CD4-positive, alpha-beta memory T cell (primary cell): ENCODE measurements at regions of chr4 and their contacts with region 1.

Region 1: DNA sequence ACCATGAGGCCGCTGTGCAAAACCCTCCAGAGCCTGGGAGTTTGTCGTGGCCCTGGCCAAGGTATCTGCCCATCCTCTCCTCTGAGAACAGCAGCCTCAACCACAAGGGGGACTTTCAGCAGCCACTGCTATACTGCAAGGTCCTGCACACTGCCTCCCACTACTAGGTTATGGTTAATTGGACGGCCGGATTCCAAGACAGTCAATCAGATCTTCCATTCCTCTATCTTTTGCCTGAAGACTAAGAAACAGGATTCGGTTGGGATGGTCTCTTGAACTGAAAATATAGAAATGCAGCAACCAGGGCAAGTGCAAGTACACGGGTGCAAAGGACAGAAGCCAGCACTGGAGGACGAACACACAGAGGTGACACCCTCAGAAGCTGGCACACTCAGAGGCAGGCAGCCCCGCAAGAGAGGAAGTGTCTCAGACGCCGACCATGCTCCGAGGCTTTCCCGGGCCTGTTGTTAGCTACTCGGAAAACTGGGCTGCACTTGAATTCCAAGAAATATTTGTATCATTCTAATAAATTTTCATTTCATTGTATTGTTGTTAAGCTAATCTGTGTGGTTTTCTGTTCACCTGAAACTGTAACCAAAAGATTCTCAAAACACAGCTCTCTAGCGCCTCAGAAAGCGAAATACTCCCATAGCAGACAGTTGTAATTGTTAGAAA is 63.3 kb downstream of the AFAP1 start:
- DNase-seq: peak; percentile 30 to 45 (median 36)
- H3K4me3 ChIP-seq: peak overlapping the region in 1 of 2 donors; percentile 33
- H3K4me3 Mint-ChIP-seq: peak overlapping the region; percentile 61 to 94 (median 82)
- H3K27ac ChIP-seq: peak overlapping the region; percentile 44
- H3K27ac Mint-ChIP-seq: peak overlapping the region; percentile 67 to 96 (median 91)
- H3K4me1 ChIP-seq: peaks cover 42% of the 10 kb centered on the region
- H3K4me1 Mint-ChIP-seq: peaks cover 38 to 67% (median 58%) of the 10 kb centered on the region in 4 donors
- H3K27me3 ChIP-seq: no peaks in the 10 kb centered on the region
- H3K27me3 Mint-ChIP-seq: no peaks in the 10 kb centered on the region

Region 2: GRCh38 chr4:7827991-7828720 is 48.2 kb before region 1 on chr4:
- CTCF ChIA-PET with region 1: interaction called, 4 read pairs
- POLR2A ChIA-PET with region 1: interaction called, 3 read pairs
- intact Hi-C with region 1: loop called (anchors 1 kb)
- DNase-seq: peak; percentile 47 to 90 (median 57)
- H3K4me3 ChIP-seq: peak overlapping the region in 1 of 2 donors; percentile 29
- H3K4me3 Mint-ChIP-seq: peak overlapping the region; percentile 5 to 86 (median 77)
- H3K27ac ChIP-seq: peak overlapping the region; percentile 55
- H3K27ac Mint-ChIP-seq: peak overlapping the region; percentile 88 to 97 (median 89)
- H3K4me1 ChIP-seq: peaks cover 53% of the 10 kb centered on the region
- H3K4me1 Mint-ChIP-seq: peaks cover 54 to 71% (median 61%) of the 10 kb centered on the region in 4 donors
- H3K27me3 ChIP-seq: no peaks in the 10 kb centered on the region
- H3K27me3 Mint-ChIP-seq: no peaks in the 10 kb centered on the region

Region 3: DNA sequence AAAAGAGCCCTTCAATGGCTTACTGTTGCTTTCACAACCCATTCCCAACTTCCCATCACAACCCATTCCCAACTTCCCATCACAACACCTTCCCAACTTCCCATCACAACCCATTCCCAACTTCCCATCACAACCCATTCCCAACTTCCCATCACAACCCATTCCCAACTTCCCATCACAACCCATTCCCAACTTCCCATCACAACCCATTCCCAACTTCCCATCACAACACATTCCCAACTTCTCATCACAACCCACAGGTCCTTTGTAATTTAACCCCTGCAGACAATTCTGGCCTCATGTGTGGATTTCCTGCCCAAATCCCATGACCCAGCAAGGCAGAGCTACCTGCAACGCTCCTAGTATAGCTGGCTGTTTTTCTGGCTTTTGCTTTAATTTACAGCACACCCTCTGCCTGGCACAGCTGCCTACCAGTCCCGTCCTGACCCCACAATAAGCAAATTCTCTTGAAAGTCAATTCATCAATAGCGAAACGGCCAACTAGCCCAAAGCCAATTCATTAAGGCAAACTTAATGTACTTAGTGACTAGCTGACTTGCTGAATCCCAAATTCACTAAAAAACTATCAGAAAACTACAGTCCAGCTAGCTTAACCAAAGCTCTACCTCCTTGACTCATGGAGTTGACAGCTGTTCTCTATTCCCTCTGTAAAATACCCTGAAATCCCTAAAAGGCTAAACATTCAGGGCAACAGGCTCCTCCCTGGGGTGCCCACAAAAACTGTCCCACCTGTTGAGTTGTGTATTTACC is 12.2 kb before region 1 on chr4:
- CTCF ChIA-PET with region 1: interaction called, 18 read pairs
- POLR2A ChIA-PET with region 1: interaction called, 34 read pairs
- intact Hi-C with region 1: no loop called
- DNase-seq: peak in 4 of 5 donors; percentile 36 to 68 (median 58)
- H3K4me3 ChIP-seq: no peak overlapping the region
- H3K4me3 Mint-ChIP-seq: peak overlapping the region in 7 of 8 donors; percentile 35 to 76 (median 61)
- H3K27ac ChIP-seq: no peak overlapping the region
- H3K27ac Mint-ChIP-seq: peak overlapping the region; percentile 60 to 99 (median 91)
- H3K4me1 ChIP-seq: peaks cover 18% of the 10 kb centered on the region
- H3K4me1 Mint-ChIP-seq: peaks cover 26 to 43% (median 34%) of the 10 kb centered on the region in 4 donors
- H3K27me3 ChIP-seq: no peaks in the 10 kb centered on the region
- H3K27me3 Mint-ChIP-seq: peaks cover 0 to 4% of the 10 kb centered on the region in 2 donors

Region 4: DNA sequence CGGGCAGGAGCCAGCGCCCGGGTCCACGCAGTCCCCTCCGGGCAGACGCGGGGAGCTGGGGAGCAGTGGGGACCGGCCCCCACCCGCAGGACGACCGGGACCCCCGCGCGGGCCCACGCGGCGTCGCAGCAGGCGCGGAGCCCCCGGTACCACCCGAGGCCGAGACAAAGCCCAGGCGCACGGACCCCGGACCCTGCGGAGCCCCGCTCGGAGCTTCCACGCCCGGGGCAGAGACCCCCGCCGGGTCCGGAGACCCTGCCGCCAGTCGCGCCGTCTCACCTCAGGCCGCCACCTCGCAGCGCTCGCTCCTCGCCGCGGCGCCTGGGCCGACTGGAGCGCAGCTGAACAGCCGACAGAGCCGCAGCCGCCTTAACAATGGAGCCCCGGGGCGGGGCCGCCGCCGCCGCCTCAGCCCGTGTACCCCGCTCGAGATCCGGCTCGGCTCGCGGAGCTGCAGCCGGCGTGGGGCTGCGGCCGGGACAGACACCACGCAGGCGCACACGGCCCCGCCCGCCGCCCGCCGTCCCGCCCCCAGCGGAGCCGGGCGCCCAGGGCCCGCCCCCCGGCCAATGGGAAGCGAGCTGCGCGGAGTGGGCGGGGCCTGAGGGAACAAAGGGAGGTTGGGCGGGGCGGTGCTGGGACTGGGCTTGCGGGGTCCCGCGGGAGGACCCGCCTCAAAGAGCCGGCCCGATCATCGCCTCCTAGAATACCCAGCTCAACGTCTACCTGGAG is 63.2 kb after region 1 on chr4 and contains the start of gene AFAP1:
- CTCF ChIA-PET with region 1: interaction called, 7 read pairs
- POLR2A ChIA-PET with region 1: interaction called, 20 read pairs
- intact Hi-C with region 1: loop called (anchors 2 kb)
- DNase-seq: peak; percentile 86 to 94 (median 92)
- H3K4me3 ChIP-seq: peak within 1 kb of the TSS; percentile 58 to 61
- H3K4me3 Mint-ChIP-seq: peak within 1 kb of the TSS; percentile 66 to 88 (median 74)
- H3K27ac ChIP-seq: peak within 1 kb of the TSS; percentile 70
- H3K27ac Mint-ChIP-seq: peak within 1 kb of the TSS; percentile 23 to 83 (median 45)
- H3K4me1 ChIP-seq: peaks cover 16% of the 10 kb centered on the region
- H3K4me1 Mint-ChIP-seq: peaks cover 12 to 39% (median 26%) of the 10 kb centered on the region in 4 donors
- H3K27me3 ChIP-seq: no peaks in the 10 kb centered on the region
- H3K27me3 Mint-ChIP-seq: peaks cover 0 to 2% of the 10 kb centered on the region in 2 donors
- total RNA-seq, gene AFAP1: 18.8 to 21.8 TPM

Region 5: DNA sequence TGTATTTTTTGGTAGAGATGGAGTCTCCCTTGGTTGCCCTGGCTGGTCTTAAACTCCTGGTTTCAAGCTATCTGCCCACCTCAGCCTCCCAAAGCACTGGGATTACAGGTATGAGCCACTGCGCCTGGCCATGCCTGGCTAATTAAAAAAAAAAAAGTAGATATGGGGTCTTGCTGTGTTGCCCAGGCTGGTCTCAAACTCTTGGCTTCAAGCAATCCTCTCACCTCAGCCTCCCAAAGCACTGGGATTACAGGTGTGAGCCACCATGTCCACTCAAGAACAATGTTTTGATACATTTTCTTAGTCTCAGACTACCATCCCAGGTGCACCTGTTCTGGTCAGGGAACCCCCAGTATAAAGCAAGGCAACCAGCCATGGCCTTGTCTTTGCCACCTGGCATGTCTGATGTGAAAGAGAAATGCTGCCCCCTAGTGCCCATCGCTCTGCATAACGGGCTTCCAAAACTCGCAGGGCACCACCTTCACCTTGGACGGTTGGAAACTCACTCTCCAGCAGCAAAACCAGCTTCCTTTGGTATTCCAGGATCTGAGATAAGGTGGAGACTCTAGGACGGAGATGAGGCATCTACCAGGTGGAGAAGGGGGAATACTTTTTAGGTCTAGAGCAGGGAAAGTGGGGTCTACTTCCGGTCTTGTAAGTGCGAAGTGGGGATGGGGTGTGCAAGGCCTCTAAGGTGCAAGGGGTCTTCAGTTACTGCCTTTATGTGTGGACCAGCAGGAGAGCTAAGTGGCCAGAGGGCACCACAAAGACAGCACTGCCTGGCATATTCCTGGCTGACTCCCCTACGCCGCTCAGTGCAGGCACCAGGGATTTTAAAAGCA is 111.0 kb after region 1 on chr4:
- CTCF ChIA-PET with region 1: interaction called, 15 read pairs
- POLR2A ChIA-PET with region 1: no interaction called
- intact Hi-C with region 1: loop called (anchors 2 kb)
- DNase-seq: peak; percentile 67 to 71 (median 69)
- H3K4me3 ChIP-seq: no peak overlapping the region
- H3K4me3 Mint-ChIP-seq: no peak overlapping the region
- H3K27ac ChIP-seq: no peak overlapping the region
- H3K27ac Mint-ChIP-seq: no peak overlapping the region
- H3K4me1 ChIP-seq: peaks cover 5% of the 10 kb centered on the region
- H3K4me1 Mint-ChIP-seq: peaks cover 2 to 4% (median 4%) of the 10 kb centered on the region in 4 donors
- H3K27me3 ChIP-seq: no peaks in the 10 kb centered on the region
- H3K27me3 Mint-ChIP-seq: no peaks in the 10 kb centered on the region